HepG2 (cell line): ENCODE measurements at regions of chr19 and their contacts with region 1.

Region 1: DNA sequence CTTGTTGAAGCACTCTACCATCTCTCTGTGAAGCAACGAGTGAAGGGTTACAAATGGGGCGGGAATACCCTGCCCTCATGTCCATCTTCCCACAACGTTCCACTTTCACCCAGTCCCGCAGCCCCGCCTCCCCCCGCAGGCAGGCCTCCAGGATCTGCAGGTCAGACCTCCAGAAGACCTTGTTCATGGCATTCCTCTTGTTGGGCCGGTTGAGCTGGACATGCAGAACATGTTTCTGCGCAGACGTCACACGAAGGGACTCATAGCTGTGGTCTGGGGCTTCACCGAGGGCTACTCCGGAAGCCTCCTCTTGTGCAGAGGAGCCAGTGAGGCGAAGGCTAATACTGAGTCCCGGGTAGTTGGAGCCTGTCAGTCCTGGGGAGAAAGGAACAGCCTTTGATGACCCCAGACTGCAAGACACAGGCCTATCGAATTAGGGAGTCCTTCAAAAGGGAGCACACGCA is 420 bp downstream of the ECH1 start:
- DNase-seq: peak; percentile 87
- ATAC-seq: peak; percentile 75
- H3K4me3 ChIP-seq: peak overlapping the region; percentile 49 to 80 (median 62)
- H3K27ac ChIP-seq: peak overlapping the region; percentile 97
- H3K4me1 ChIP-seq: peaks cover 46% of the 10 kb centered on the region
- H3K27me3 ChIP-seq: no peaks in the 10 kb centered on the region; a peak in 1 of 5 replicates
- CTCF ChIP-seq: peak; percentile 17; the same call in 1 of the 2 replicates
- EP300 ChIP-seq: 0 out of 4 replicates have a peak, but pooled peaks have one; percentile 2 to 43
- POLR2A ChIP-seq: peak in 1 of 2 experiments; percentile 69; a peak in 1 of 4 replicates
- RAD21 ChIP-seq: no peak; the same call in 1 of the 2 replicates

Region 2: DNA sequence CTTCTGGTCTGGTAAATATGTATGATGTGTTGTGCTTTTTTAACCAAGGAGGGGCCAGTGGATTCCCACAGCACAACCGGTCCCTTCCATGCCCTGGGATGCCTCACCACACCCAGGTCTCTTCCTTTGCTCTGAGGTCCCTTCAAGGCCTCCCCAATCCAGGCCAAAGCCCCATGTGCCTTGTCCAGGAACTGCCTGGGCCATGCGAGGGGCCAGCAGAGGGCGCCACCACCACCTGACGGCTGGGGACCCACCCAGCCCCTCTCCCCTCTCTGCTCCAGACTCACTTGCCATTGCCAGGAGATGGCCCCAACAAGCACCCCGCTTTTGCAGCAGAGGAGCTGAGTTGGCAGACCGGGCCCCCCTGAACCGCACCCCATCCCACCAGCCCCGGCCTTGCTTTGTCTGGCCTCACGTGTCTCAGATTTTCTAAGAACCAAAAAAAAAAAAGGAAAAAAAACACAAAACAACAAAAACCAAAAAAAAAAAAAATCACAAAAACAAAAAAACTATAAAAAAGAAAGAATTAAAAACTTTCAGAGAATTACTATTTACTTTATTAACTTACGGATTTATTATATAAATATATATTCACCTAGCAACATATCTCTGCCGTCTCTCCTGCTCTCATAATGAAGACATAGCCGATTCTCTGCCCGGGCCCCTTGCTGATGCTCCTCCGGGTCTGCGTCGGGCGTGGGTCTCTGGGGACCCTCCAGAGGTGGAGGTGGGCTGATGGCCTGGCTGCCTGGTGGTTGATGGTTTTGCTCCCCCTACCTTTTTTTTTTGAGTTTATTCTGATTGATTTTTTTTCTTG is 101.3 kb before region 1 on chr19:
- CTCF ChIA-PET with region 1: no interaction called
- POLR2A ChIA-PET with region 1: interaction called, 10 read pairs
- in situ Hi-C with region 1: no loop called
- intact Hi-C with region 1: loop called (anchors 5 kb)
- DNase-seq: peak; percentile 57
- ATAC-seq: peak; percentile 72
- H3K4me3 ChIP-seq: no peak overlapping the region
- H3K27ac ChIP-seq: no peak overlapping the region
- H3K4me1 ChIP-seq: peaks cover 16% of the 10 kb centered on the region
- H3K27me3 ChIP-seq: no peaks in the 10 kb centered on the region
- CTCF ChIP-seq: peak; percentile 96
- EP300 ChIP-seq: no peak
- POLR2A ChIP-seq: 0 out of 4 replicates have a peak, but pooled peaks of 1 of the 2 experiments have one; percentile 26
- RAD21 ChIP-seq: peak; percentile 82

Region 3: DNA sequence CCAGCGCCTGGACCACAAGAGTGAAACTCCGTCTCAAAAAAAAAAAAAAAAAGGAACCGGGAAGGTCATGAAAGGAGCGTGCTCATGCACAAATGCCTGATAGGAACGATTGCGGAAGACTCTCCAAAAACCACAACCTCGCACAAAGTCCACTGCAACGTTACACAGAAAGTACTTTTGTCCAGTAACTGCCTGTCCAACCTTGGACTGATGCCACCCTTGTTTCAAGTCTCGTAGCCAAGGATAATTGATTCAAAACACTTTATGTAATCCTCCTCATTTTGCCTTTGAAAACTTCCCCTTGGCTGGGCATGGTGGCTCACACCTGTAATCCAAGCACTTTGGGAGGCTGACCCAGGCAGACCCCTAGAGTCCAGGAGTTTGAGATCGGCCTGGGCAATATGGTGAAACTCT is 71.6 kb before region 1 on chr19:
- CTCF ChIA-PET with region 1: no interaction called
- POLR2A ChIA-PET with region 1: interaction called, 16 read pairs
- in situ Hi-C with region 1: no loop called
- intact Hi-C with region 1: no loop called
- DNase-seq: peak; percentile 98
- ATAC-seq: peak; percentile 77
- H3K4me3 ChIP-seq: no peak overlapping the region
- H3K27ac ChIP-seq: peak overlapping the region; percentile 95
- H3K4me1 ChIP-seq: peaks cover 71% of the 10 kb centered on the region
- H3K27me3 ChIP-seq: no peaks in the 10 kb centered on the region
- CTCF ChIP-seq: no peak
- EP300 ChIP-seq: peak; percentile 90 to 94
- POLR2A ChIP-seq: no peak; a peak in 1 of 4 replicates
- RAD21 ChIP-seq: no peak

Region 4: DNA sequence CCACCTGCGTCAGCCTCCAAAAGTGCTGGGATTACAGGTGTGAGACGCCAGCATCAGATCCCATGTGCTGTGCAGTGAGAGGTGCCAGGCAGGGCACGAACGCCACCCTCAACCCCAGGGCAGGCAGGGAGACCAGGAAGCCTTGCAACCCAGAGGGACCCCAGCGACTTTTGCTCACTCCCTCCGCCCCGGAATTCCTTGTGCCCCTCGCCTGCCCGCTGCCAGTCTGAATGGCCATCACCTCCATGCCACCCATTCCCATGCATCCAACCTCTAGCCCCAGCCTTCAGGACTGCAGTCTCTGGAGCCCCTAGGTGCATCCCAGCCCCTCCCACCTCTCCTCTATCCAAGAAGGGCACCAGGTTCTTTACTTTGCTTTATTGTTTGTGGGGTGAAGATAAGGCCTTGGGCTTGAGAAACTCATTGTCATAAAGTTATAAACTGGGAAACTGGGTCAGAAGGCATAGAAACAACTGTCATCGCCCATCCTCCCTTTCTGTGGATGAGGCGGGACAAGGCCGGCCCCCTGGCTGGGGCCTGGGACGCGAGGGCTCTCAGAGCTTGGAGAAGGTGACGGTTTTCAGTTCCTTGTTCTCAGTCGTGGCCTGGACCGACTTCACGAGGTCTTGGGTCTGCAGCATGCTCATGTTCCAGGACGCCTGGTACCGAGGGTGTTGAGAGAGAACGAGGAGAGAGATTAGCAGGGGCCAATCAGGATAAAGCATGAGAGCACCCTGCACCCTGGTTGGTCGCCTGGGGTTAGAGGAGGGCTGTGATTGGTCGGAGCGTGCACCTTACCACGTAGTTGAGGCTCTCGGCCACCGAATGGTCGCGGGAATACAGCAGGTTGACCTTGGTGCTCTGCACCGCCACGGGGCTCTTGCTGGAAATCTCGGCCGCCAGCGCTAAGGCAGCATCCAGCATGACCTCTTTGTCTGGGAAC is 15.8 kb before region 1 on chr19:
- CTCF ChIA-PET with region 1: no interaction called
- POLR2A ChIA-PET with region 1: interaction called, 77 read pairs
- in situ Hi-C with region 1: no loop called
- intact Hi-C with region 1: no loop called
- DNase-seq: no peak
- ATAC-seq: no peak
- H3K4me3 ChIP-seq: no peak overlapping the region
- H3K27ac ChIP-seq: no peak overlapping the region
- H3K4me1 ChIP-seq: peaks cover 36% of the 10 kb centered on the region
- H3K27me3 ChIP-seq: no peaks in the 10 kb centered on the region
- CTCF ChIP-seq: no peak
- EP300 ChIP-seq: no peak
- POLR2A ChIP-seq: 0 out of 4 replicates have a peak, but pooled peaks of 1 of the 2 experiments have one; percentile 18
- RAD21 ChIP-seq: no peak

Region 5: DNA sequence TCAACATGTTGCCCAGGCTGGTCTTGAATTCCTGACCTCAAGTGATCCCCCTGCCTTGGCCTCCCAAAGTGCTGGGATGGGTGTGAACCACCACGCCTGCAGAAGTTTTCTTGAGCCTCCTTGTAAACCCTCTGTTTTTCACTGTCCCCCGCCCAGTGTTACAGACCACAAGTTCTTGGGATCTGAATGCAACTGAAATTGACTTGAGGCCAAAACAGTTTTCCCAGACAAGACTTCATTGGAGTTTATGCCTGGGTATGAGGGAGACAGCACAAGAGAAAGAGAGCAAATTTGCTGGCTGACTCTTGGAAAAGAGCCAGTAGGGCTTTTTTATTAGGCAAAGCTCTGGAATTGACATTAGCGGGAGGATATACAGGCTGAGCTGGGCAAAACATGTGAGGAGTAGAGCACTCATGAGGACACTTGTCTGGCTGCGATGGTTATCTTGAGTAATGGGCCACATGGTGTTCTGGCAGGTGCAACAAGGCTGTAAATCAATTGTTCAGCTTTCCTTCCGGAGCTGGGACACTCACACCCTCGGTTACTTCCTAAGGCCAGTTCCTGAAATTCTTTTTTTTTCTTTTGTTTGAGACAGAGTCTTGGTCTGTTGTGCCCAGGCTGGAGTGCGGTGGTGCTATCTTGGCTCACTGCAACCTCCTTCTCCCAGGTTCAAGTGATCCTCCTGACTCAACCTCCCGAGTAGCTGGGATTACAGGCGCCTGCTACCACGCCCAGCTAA is 31.3 kb after region 1 on chr19:
- CTCF ChIA-PET with region 1: no interaction called
- POLR2A ChIA-PET with region 1: interaction called, 12 read pairs
- in situ Hi-C with region 1: no loop called
- intact Hi-C with region 1: no loop called
- DNase-seq: no peak
- ATAC-seq: no peak
- H3K4me3 ChIP-seq: no peak overlapping the region
- H3K27ac ChIP-seq: no peak overlapping the region
- H3K4me1 ChIP-seq: peaks cover 53% of the 10 kb centered on the region
- H3K27me3 ChIP-seq: no peaks in the 10 kb centered on the region
- CTCF ChIP-seq: no peak
- EP300 ChIP-seq: no peak
- POLR2A ChIP-seq: no peak
- RAD21 ChIP-seq: no peak

Region 6: GRCh38 chr19:38929929-38930775 is 99.0 kb after region 1 on chr19 and contains the start of gene SARS2:
- CTCF ChIA-PET with region 1: no interaction called
- POLR2A ChIA-PET with region 1: interaction called, 18 read pairs
- in situ Hi-C with region 1: no loop called
- intact Hi-C with region 1: no loop called
- DNase-seq: peak; percentile 89
- ATAC-seq: peak; percentile 46
- H3K4me3 ChIP-seq: peak within 1 kb of the TSS; percentile 77 to 84 (median 81)
- H3K27ac ChIP-seq: peak within 1 kb of the TSS; percentile 91
- H3K4me1 ChIP-seq: peaks cover 50% of the 10 kb centered on the region
- H3K27me3 ChIP-seq: no peaks in the 10 kb centered on the region
- CTCF ChIP-seq: peak; percentile 99
- EP300 ChIP-seq: 0 out of 4 replicates have a peak, but pooled peaks of 1 of the 2 experiments have one; percentile 39
- POLR2A ChIP-seq: peak in 1 of 2 experiments; percentile 97; a peak in 3 of 4 replicates
- RAD21 ChIP-seq: peak; percentile 84
- total RNA-seq, gene SARS2: 30.1 and 48.6 TPM in 2 replicates

Region 7: DNA sequence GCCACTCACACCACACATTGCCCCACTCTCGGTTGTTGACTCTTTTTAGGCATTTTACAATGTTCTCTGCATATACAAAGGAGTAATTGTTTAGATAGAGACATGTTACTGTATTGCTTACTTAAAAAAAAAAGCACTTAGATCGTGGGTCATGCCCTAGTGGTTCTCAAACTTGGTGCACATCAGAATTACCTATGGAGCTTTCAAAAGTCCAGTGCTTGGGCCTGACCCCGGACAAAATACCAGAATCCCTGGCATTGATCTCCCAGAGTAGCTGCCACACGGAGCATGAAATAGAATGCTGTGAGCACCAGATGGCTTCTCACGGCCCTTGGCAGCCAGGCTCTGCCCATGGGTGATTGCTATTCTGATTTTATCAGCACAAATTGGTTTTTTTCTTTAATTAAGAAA is 273.0 kb after region 1 on chr19:
- CTCF ChIA-PET with region 1: no interaction called
- POLR2A ChIA-PET with region 1: no interaction called
- in situ Hi-C with region 1: no loop called
- intact Hi-C with region 1: no loop called
- DNase-seq: peak; percentile 42
- ATAC-seq: no peak
- H3K4me3 ChIP-seq: no peak overlapping the region
- H3K27ac ChIP-seq: no peak overlapping the region
- H3K4me1 ChIP-seq: peaks cover 7% of the 10 kb centered on the region
- H3K27me3 ChIP-seq: no peaks in the 10 kb centered on the region
- CTCF ChIP-seq: no peak
- EP300 ChIP-seq: no peak
- POLR2A ChIP-seq: no peak
- RAD21 ChIP-seq: no peak